ENCODE measurements at regions of chr4 and their contacts with region 1.

Region 1: DNA sequence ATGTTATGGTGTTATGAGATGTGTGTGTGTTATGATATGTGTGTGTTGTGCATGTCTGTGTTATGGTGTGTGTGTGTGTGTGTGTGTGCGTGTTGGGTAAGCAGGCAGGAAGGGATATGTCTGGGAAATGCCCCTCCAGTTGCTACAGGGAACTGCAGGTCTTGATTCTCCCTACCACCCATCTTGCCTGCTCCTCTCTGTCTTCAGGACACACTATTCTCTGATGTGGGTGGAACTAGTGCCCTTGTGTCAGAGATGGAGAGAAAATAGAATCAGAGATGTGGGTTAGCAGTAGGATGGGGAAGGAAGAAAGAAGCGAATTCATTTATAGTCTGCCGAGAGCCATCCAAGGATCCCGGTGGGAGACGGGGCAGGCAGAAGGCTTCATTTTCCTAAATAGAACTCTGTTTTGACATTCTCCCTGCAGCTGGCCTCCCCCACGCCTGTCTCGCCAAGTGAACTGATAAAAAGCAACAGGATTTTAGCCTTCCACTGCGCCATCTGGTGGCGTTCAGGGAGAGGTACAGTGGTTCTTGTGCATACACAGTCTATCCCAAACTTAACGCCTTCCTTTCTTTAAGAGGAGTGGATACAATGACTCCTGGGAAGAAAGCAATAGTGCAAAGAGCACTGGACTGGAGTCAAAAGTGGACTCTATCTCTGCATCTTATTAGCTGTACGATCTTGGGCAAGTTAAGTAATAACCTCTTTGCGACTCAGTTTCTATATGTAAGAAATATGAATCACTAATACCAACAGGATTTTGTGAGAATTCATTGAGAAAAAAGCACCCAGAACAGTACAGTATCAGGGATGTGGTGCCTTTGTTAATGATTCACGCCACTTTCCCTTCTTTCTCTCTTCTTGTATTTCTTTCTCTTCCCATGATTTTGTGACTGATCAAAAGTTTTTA is 14.1 kb upstream of the MGST2 start:
- DNase-seq: peak; percentile 83
- ATAC-seq: peak; percentile 93
- H3K4me3 ChIP-seq: no peak overlapping the region
- H3K27ac ChIP-seq: no peak overlapping the region
- H3K4me1 ChIP-seq: no peaks in the 10 kb centered on the region
- H3K27me3 ChIP-seq: no peaks in the 10 kb centered on the region
- CTCF ChIP-seq: peak; percentile 93
- POLR2A ChIP-seq: no peak
- RAD21 ChIP-seq: peak; percentile 81

Region 2: DNA sequence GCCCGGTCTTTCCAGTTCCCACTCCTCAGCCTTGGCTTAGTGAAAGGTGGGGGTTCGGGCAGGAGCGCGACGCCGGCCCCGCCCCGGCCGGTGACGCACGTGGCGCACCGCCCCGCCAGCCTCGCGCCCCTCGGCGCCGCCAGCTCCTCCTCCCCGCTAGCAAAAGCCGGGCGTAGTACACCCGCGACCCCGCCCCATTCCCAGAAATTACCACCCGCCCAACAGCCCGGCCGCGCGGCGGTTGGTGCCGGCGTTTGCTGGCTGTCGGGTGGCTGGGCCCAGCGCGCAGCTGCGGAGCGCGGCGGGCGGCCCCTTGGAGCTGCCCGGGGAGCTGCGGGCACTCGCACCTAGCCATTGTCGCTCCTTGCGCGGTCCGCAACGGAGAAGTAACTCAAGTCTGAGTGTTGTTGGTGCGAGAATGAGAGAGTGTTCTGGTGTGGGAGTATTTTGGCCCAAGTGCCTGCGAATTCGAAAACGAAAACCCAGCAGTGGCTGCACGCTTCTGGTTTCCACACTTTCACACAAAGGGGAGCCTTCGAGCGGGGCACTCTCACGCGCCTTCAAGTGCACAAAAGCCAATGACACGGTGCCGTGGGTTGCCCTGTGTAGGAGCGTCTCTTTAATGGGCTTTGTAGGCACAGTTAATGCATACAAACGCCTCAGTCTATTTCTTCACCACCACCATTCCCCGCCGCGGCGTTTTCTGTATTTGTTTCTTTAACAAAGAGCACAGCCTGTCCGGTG is 473.5 kb before region 1 on chr4:
- CTCF ChIA-PET with region 1: no interaction called
- POLR2A ChIA-PET with region 1: interaction called, 12 read pairs
- dilution Hi-C with region 1: no loop called
- in situ Hi-C with region 1: no loop called
- intact Hi-C with region 1: no loop called
- DNase-seq: peak; percentile 91
- ATAC-seq: peak; percentile 78
- H3K4me3 ChIP-seq: peak overlapping the region; percentile 88
- H3K27ac ChIP-seq: peak overlapping the region; percentile 75
- H3K4me1 ChIP-seq: peaks cover 2% of the 10 kb centered on the region; the same call in 1 of the 2 replicates
- H3K27me3 ChIP-seq: no peaks in the 10 kb centered on the region
- CTCF ChIP-seq: no peak
- POLR2A ChIP-seq: peak; percentile 60; the same call in 1 of the 2 replicates
- RAD21 ChIP-seq: peak; percentile 5; the same call in 1 of the 2 replicates

Region 3: DNA sequence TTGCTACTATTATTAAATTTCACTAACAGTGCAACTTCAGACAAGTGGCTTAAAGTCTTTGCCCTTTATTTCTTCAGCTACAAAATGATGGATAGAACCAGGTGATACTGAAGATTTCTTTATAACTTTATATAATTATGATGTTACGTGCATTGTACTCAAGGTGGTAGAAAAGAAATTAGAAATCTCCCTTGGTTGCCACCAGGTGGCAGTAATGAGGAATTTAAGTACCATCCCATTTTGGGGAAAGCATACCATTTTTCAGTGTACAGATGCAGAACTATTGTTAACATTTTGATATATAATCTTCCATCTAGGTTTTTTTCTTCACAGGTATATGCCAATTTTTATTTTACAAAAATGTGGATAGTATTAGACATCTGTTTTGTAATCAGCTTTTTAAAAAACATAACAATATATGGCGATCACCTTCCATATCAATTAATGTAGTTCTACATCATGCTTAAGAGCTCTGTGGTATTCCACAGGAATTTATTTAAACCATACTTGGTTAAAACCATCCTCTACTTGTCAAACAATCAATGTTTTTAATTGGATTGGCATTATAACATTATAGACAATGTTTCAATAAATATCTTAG is 235.4 kb before region 1 on chr4:
- CTCF ChIA-PET with region 1: no interaction called
- POLR2A ChIA-PET with region 1: no interaction called
- dilution Hi-C with region 1: no loop called
- in situ Hi-C with region 1: no loop called
- intact Hi-C with region 1: loop called (anchors 2 kb)
- DNase-seq: peak; percentile 67
- ATAC-seq: peak; percentile 63
- H3K4me3 ChIP-seq: no peak overlapping the region
- H3K27ac ChIP-seq: no peak overlapping the region
- H3K4me1 ChIP-seq: no peaks in the 10 kb centered on the region
- H3K27me3 ChIP-seq: no peaks in the 10 kb centered on the region
- CTCF ChIP-seq: peak; percentile 57
- POLR2A ChIP-seq: no peak
- RAD21 ChIP-seq: peak; percentile 43

Region 4: DNA sequence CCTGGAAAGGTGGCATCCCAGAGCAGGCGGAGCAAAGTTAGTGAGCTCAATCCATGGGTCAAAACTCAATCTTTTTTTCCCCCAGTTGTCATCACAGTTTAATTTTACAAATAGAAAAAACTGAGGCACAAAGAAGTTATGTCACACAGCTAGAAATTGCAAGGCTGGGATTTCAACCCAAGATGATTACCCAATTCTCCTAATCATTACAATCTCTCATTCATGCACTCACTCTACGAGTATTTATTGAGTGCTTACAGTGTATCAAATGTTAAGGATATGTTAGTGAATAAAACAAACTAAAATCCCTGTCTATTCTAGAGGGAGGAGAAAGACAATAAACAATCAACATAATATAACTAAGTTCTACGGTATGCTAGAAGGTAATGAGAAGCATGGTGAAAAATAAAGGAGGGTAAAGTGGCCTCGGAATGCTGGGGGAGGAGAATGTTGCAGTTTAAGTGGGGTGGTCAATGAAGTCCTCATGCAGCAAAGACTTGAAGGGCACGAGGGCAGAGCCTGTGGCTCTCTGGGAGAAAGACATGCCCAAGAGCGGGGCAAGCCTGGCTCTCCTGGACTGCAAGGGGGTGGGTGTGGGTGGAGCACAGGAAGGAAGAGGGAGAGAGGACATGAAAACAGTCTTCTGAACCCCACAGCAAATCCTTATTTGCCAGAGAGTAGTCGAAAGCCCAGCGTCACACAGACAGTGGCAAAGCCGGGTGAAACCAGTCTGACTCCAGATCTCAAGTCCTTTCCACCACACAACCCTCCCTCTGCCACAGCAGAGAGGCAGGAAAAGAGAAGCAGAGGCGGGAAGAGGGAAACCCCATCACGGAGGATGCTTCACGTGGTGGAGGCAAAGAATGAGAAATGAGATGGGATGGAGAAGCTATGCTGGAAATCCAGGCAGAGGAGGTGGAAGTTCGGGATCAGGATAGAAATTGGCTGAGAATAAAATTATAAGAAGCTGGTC is 149.3 kb before region 1 on chr4:
- CTCF ChIA-PET with region 1: interaction called, 7 read pairs
- POLR2A ChIA-PET with region 1: no interaction called
- dilution Hi-C with region 1: no loop called
- in situ Hi-C with region 1: loop called (anchors 5 kb)
- intact Hi-C with region 1: loop called (anchors 1 kb)
- DNase-seq: no peak
- ATAC-seq: peak; percentile 38
- H3K4me3 ChIP-seq: no peak overlapping the region
- H3K27ac ChIP-seq: no peak overlapping the region
- H3K4me1 ChIP-seq: peaks cover 1% of the 10 kb centered on the region; the same call in 1 of the 2 replicates
- H3K27me3 ChIP-seq: no peaks in the 10 kb centered on the region
- CTCF ChIP-seq: no peak
- POLR2A ChIP-seq: no peak
- RAD21 ChIP-seq: no peak

Region 5: DNA sequence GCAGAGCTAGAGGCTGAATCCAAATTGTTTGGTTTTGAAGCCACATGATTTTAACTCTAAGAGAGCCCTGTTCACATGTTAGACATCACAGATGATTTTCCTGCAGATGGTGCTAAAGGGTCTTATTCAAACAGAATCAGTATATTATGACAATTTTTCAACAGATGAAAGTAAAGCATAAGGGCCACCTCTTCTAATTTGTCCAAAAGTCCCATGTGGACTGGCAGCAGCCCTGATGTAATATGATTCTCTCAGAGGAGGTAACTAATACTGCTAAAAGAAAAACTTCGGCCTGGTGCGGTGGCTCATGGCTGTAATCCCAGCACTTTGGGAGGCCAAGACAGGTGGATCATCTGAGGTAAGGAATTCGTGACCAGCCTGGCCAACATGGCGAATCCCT is 69.5 kb before region 1 on chr4:
- CTCF ChIA-PET with region 1: interaction called, 3 read pairs
- POLR2A ChIA-PET with region 1: no interaction called
- dilution Hi-C with region 1: no loop called
- in situ Hi-C with region 1: no loop called
- intact Hi-C with region 1: loop called (anchors 2 kb)
- DNase-seq: peak; percentile 61
- ATAC-seq: peak; percentile 79
- H3K4me3 ChIP-seq: no peak overlapping the region
- H3K27ac ChIP-seq: no peak overlapping the region
- H3K4me1 ChIP-seq: no peaks in the 10 kb centered on the region
- H3K27me3 ChIP-seq: peaks cover 5% of the 10 kb centered on the region
- CTCF ChIP-seq: peak; percentile 39
- POLR2A ChIP-seq: no peak
- RAD21 ChIP-seq: peak; percentile 21

Region 6: GRCh38 chr4:139603576-139604387 is 47.8 kb before region 1 on chr4:
- CTCF ChIA-PET with region 1: interaction called, 37 read pairs
- POLR2A ChIA-PET with region 1: no interaction called
- dilution Hi-C with region 1: no loop called
- in situ Hi-C with region 1: no loop called
- intact Hi-C with region 1: loop called (anchors 1 kb)
- DNase-seq: peak; percentile 59
- ATAC-seq: peak; percentile 43
- H3K4me3 ChIP-seq: no peak overlapping the region
- H3K27ac ChIP-seq: no peak overlapping the region
- H3K4me1 ChIP-seq: peaks cover 5% of the 10 kb centered on the region; the same call in 1 of the 2 replicates
- H3K27me3 ChIP-seq: peaks cover 14% of the 10 kb centered on the region
- CTCF ChIP-seq: peak; percentile 60
- POLR2A ChIP-seq: no peak
- RAD21 ChIP-seq: peak; percentile 69

Measured in IMR-90 (cell line).